ENCODE measurements at regions of chr5 and their contacts with region 1.

Region 1: GRCh38 chr5:58498340-58498942 is 7.2 kb downstream of the GAPT start:
- DNase-seq: no peak
- ATAC-seq: no peak
- H3K4me3 ChIP-seq: no peak overlapping the region
- H3K27ac ChIP-seq: no peak overlapping the region
- H3K4me1 ChIP-seq: no peaks in the 10 kb centered on the region
- H3K27me3 ChIP-seq: peaks cover 26% of the 10 kb centered on the region
- CTCF ChIP-seq: peak; percentile 79

Region 2: DNA sequence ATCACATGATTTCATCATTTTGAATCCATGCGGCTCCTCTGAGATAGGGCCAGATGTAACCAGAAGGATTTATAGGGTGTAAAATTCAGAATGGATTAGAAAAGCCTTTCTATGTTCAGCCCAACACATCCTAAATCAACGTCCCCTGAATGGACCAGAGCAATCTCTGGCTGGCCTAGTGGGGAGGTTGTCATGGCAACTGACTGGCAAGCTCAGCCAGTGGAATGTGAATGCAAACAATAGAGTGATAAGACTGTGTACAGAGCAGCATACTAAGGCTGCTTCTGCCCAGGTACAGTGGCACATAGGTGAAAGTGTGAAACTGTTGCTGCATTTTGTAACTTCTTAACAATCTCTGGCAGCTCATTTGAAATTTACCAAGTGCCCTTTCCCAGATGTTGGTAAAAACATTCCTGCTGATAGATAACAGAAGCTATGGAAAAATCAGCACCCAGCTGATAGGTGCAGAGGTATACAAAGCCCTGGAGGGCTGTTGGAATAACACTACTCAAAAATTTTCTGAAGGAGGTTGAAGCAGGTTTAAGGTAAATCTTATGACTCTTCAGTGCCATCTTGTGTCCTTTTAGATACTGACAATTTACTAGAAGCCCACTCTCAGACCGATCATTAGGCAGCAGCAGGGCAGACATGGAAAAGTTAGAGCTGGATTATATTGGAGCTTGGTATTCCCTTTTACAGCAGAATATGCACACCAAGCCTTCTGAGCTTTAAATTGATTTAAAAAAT is 351.7 kb after region 1 on chr5:
- CTCF ChIA-PET with region 1: no interaction called
- POLR2A ChIA-PET with region 1: no interaction called
- in situ Hi-C with region 1: no loop called
- intact Hi-C with region 1: loop called (anchors 1 kb)
- DNase-seq: peak; percentile 10
- ATAC-seq: peak; percentile 84
- H3K4me3 ChIP-seq: no peak overlapping the region
- H3K27ac ChIP-seq: no peak overlapping the region
- H3K4me1 ChIP-seq: no peaks in the 10 kb centered on the region; the same call in 1 of the 2 replicates
- H3K27me3 ChIP-seq: peaks cover 7% of the 10 kb centered on the region
- CTCF ChIP-seq: peak; percentile 67